ENCODE measurements at regions of chr12 and their contacts with region 1.

Region 1: GRCh38 chr12:96516472-96517430 is 27.4 kb downstream of the CFAP54 start:
- DNase-seq: peak; percentile 63 to 77
- H3K4me3 ChIP-seq: no peak overlapping the region
- H3K27ac ChIP-seq: no peak overlapping the region
- H3K4me1 ChIP-seq: peaks cover 0 to 7% (median 2%) of the 10 kb centered on the region in 4 experiments; a peak in 3 of 7 replicates
- H3K27me3 ChIP-seq: no peaks in the 10 kb centered on the region
- CTCF ChIP-seq: peak in 2 of 3 experiments; percentile 62; a peak in 3 of 4 replicates
- EP300 ChIP-seq: no peak
- POLR2A ChIP-seq: no peak
- RAD21 ChIP-seq: peak; percentile 86 to 90

Region 2: GRCh38 chr12:96015672-96016071 is 501.1 kb before region 1 on chr12:
- CTCF ChIA-PET with region 1: interaction called, 12 read pairs
- POLR2A ChIA-PET with region 1: no interaction called
- DNase-seq: no peak
- H3K4me3 ChIP-seq: no peak overlapping the region
- H3K27ac ChIP-seq: no peak overlapping the region
- H3K4me1 ChIP-seq: no peaks in the 10 kb centered on the region
- H3K27me3 ChIP-seq: peaks cover 0 to 1% (median 0%) of the 10 kb centered on the region in 4 experiments; a peak in 1 of 7 replicates
- CTCF ChIP-seq: peak; percentile 42 to 52 (median 50)
- EP300 ChIP-seq: no peak
- POLR2A ChIP-seq: no peak
- RAD21 ChIP-seq: peak; percentile 28 to 45; a peak in 3 of 4 replicates

Region 3: DNA sequence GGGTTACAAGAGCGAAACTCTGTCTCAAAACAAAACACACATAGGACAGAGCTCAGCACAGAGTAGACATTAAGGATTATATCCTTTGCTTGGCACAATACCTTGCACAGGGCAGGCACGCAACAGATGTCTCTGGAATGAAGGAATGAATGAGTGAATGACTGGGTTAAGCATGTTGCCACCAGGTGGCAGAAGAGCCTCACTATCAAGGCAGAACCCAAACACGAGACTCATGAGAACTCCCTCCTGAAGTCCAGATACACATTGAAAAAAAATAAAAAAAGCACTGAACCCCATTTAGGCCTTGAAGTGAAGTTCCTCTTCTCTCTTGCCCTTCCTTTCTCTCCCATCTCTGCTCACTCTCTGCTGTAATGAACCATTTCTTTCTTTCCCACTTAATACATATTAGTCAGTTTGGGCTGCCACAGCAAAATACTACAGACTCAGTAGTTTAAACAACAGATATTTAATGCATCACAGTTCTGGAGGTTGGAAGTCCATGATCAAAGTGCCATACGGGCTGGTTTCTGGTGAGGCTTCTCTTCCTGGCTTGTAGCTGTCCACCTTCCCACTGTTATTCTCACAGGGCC is 454.8 kb before region 1 on chr12:
- CTCF ChIA-PET with region 1: interaction called, 37 read pairs
- POLR2A ChIA-PET with region 1: no interaction called
- DNase-seq: peak; percentile 39 to 72
- H3K4me3 ChIP-seq: no peak overlapping the region
- H3K27ac ChIP-seq: no peak overlapping the region
- H3K4me1 ChIP-seq: peaks cover 0 to 8% (median 0%) of the 10 kb centered on the region in 4 experiments; a peak in 3 of 7 replicates
- H3K27me3 ChIP-seq: no peaks in the 10 kb centered on the region
- CTCF ChIP-seq: peak; percentile 50 to 87 (median 79)
- EP300 ChIP-seq: no peak
- POLR2A ChIP-seq: no peak
- RAD21 ChIP-seq: peak; percentile 95 to 96

Region 4: DNA sequence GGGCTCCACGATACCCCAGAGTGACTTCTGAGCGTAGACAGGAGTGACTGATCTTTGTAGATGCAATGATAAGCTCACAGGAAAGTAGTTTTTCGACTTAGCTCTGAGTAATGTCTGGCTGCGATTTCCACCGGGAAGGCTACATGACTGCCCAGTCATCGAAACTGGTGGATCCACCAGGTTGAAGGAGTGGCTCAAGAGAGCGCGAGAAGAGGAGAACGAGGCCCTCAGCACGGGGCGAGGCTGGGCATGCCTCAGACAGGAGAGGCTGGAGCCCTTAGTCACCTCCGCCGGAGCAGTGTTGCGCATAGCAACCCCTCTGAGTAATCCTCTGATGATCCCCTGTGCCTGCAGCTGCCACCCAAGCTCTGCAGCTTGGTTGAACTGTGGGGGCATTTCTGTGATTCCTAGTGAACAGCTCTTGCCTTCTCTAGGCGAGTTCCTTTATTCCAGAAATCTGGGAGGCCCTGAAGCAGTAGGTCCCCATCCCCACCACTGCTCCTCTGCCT is 297.0 kb before region 1 on chr12:
- CTCF ChIA-PET with region 1: interaction called, 27 read pairs
- POLR2A ChIA-PET with region 1: no interaction called
- DNase-seq: peak in 1 of 2 experiments; percentile 53
- H3K4me3 ChIP-seq: no peak overlapping the region
- H3K27ac ChIP-seq: no peak overlapping the region
- H3K4me1 ChIP-seq: peaks cover 0 to 12% (median 2%) of the 10 kb centered on the region in 4 experiments; a peak in 3 of 7 replicates
- H3K27me3 ChIP-seq: no peaks in the 10 kb centered on the region
- CTCF ChIP-seq: no peak
- EP300 ChIP-seq: no peak
- POLR2A ChIP-seq: no peak
- RAD21 ChIP-seq: no peak

Region 5: GRCh38 chr12:96489103-96490056 is 27.4 kb before region 1 on chr12 and contains the start of gene CFAP54:
- CTCF ChIA-PET with region 1: interaction called, 13 read pairs
- POLR2A ChIA-PET with region 1: no interaction called
- DNase-seq: peak; percentile 53 to 94
- H3K4me3 ChIP-seq: peak within 1 kb of the TSS; percentile 55 to 90 (median 88)
- H3K27ac ChIP-seq: no peak within 1 kb of the TSS
- H3K4me1 ChIP-seq: no peaks in the 10 kb centered on the region; a peak in 1 of 7 replicates
- H3K27me3 ChIP-seq: no peaks in the 10 kb centered on the region; a peak in 1 of 7 replicates
- CTCF ChIP-seq: peak; percentile 71 to 89 (median 89)
- EP300 ChIP-seq: peak in 1 of 2 experiments; percentile 75; a peak in 1 of 3 replicates
- POLR2A ChIP-seq: no peak
- RAD21 ChIP-seq: peak; percentile 54 to 71
- total RNA-seq, gene CFAP54: 0.17 and 0.42 TPM in 2 replicates

Measured in H1 (cell line).